GM12878 (cell line): ENCODE measurements at regions of chr1 and their contacts with region 1.

Region 1: GRCh38 chr1:145985502-145986439 is 10.6 kb downstream of the TXNIP start:
- DNase-seq: no peak
- ATAC-seq: no peak
- H3K4me3 ChIP-seq: no peak overlapping the region
- H3K27ac ChIP-seq: peak overlapping the region; percentile 14; the same call in 1 of the 2 replicates
- H3K4me1 ChIP-seq: peaks cover 23% of the 10 kb centered on the region
- H3K27me3 ChIP-seq: no peaks in the 10 kb centered on the region
- CTCF ChIP-seq: no peak
- EP300 ChIP-seq: no peak
- POLR2A ChIP-seq: no peak
- RAD21 ChIP-seq: no peak

Region 2: GRCh38 chr1:145942405-145942804 is 43.4 kb before region 1 on chr1:
- CTCF ChIA-PET with region 1: no interaction called
- POLR2A ChIA-PET with region 1: no interaction called
- RAD21 ChIA-PET with region 1: no interaction called
- SMC1A ChIA-PET with region 1: no interaction called
- in situ Hi-C with region 1: no loop called
- intact Hi-C with region 1: no loop called
- DNase-seq: no peak
- ATAC-seq: no peak
- H3K4me3 ChIP-seq: no peak overlapping the region
- H3K27ac ChIP-seq: no peak overlapping the region
- H3K4me1 ChIP-seq: no peaks in the 10 kb centered on the region
- H3K27me3 ChIP-seq: no peaks in the 10 kb centered on the region
- CTCF ChIP-seq: no peak
- EP300 ChIP-seq: no peak
- POLR2A ChIP-seq: no peak
- RAD21 ChIP-seq: no peak

Region 3: GRCh38 chr1:145996433-145997015 is 10.8 kb after region 1 on chr1 and contains the start of gene TXNIP:
- CTCF ChIA-PET with region 1: interaction called, 361 read pairs
- POLR2A ChIA-PET with region 1: interaction called, 82 read pairs
- RAD21 ChIA-PET with region 1: interaction called, 100 read pairs
- SMC1A ChIA-PET with region 1: interaction called, 244 read pairs
- in situ Hi-C with region 1: no loop called
- intact Hi-C with region 1: no loop called
- DNase-seq: peak; percentile 51
- ATAC-seq: peak; percentile 92
- H3K4me3 ChIP-seq: peak within 1 kb of the TSS; percentile 81
- H3K27ac ChIP-seq: peak within 1 kb of the TSS; percentile 82
- H3K4me1 ChIP-seq: peaks cover 8% of the 10 kb centered on the region
- H3K27me3 ChIP-seq: no peaks in the 10 kb centered on the region
- CTCF ChIP-seq: no peak
- EP300 ChIP-seq: no peak; a peak in 1 of 4 replicates
- POLR2A ChIP-seq: peak; percentile 86
- RAD21 ChIP-seq: no peak
- polyA plus RNA-seq, gene TXNIP: 48.7 to 75.5 TPM